ENCODE measurements at regions of chr17 and their contacts with region 1.

Region 1: GRCh38 chr17:48492401-48493298 is 38.2 kb downstream of the HOXB1 start:
- DNase-seq: peak; percentile 76
- ATAC-seq: peak; percentile 95
- H3K4me3 Mint-ChIP-seq: peak overlapping the region; percentile 46
- H3K27ac Mint-ChIP-seq: peak overlapping the region; percentile 24
- H3K4me1 Mint-ChIP-seq: peaks cover 35% of the 10 kb centered on the region
- H3K27me3 Mint-ChIP-seq: peaks cover 16% of the 10 kb centered on the region

Region 2: GRCh38 chr17:48351831-48352332 is 140.8 kb before region 1 on chr17:
- CTCF ChIA-PET with region 1: interaction called, 29 read pairs
- DNase-seq: no peak
- ATAC-seq: peak; percentile 30
- H3K4me3 Mint-ChIP-seq: no peak overlapping the region
- H3K27ac Mint-ChIP-seq: no peak overlapping the region
- H3K4me1 Mint-ChIP-seq: peaks cover 14% of the 10 kb centered on the region
- H3K27me3 Mint-ChIP-seq: no peaks in the 10 kb centered on the region

Region 3: DNA sequence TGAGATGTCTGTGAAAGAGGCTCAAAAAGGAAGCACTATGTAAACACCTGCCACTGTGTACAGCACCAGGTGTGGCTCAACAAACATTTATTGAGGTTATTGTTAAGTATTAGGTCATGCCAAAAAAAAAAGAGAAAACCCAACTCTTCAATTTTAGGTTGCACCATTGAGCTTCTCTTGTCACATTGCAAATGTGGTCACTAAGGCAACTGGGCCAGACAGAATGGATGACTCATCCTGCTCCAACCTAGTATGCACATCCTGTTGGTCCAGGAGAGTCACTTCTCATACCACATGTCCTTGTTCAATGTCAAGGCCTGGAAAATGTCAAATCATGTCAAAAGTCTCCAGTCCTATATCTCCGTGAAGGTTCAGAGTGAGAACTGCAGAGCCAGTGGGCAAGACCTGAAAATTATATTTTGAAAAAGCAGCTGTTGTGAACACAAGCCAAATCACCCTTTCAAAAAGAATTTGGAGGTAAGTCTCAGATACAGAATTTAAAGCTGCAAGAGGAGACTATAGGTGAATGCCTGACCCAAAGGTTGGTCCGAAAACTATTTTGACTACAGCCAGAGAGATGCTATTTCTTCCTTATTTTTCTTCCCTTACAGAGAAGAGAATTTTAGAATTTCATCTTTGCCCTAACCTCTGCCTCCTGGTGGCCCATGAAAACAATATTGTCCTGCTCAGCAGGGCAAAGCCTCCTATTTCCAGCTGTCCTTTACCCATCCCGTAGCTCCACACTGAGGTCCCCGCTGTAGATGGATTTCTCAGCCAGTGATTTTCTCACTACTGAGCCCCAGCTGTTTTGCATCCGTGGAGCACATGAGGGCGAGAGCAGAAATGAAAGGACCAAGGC is 13.4 kb after region 1 on chr17:
- CTCF ChIA-PET with region 1: interaction called, 43 read pairs
- DNase-seq: peak; percentile 88
- ATAC-seq: peak; percentile 98
- H3K4me3 Mint-ChIP-seq: no peak overlapping the region
- H3K27ac Mint-ChIP-seq: peak overlapping the region; percentile 82
- H3K4me1 Mint-ChIP-seq: peaks cover 43% of the 10 kb centered on the region
- H3K27me3 Mint-ChIP-seq: peaks cover 13% of the 10 kb centered on the region

Region 4: DNA sequence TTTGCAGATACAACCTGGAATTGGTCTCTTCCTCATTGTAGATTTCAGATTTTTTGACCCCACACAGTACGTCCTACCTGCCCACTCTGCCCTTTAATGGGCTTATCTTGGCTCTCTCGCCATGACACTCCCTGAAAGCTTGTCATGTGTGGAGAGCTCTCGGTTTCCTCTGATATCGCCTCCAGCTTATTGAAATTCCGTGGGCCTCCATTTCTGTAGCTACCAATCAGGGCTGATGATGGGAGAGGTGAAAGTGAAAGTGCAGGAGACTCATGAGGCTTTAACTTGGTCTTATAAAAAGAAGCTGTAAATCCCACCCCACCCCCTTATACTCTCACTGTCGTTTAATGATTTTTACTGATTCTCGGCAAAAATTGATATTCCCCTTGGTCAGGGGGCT is 20.4 kb after region 1 on chr17:
- CTCF ChIA-PET with region 1: interaction called, 16 read pairs
- DNase-seq: no peak
- ATAC-seq: peak; percentile 18
- H3K4me3 Mint-ChIP-seq: peak overlapping the region; percentile 34
- H3K27ac Mint-ChIP-seq: peak overlapping the region; percentile 79
- H3K4me1 Mint-ChIP-seq: peaks cover 62% of the 10 kb centered on the region
- H3K27me3 Mint-ChIP-seq: peaks cover 34% of the 10 kb centered on the region

Region 5: DNA sequence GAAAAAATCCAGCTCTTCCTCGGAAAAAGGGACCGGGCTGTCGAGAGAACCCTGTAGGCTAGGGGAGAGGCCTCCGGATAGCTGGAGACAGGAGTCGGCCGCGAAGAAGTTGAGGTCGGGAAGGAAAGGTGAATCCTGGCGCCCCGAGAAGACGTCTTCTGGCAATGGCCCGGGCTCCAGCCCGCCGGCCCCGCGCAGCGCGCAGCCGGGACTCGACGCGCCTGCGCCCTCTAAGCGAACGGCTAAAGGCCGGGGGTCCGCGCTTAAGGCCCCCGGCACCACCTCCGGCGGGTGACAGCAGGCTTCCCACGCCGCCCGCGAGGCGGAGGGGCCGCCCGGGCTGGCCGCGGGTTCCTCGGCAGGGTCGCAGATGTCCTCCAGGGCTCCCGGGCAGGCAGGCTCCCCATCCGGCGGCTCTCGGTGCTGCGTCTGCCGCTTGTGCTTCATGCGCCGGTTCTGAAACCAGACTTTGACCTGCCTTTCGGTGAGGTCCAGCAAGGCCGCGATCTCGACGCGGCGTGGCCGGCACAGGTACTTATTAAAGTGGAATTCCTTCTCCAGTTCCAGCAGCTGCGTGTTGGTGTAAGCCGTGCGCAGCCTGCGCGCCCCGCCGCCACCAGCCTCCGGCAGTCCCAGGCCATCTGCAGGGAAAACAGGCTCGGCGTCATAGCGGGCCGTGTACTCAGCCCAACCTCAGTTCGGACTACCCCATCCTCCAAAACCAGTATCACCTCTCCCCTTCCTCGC is 50.6 kb after region 1 on chr17:
- CTCF ChIA-PET with region 1: interaction called, 17 read pairs
- DNase-seq: peak; percentile 79
- ATAC-seq: peak; percentile 74
- H3K4me3 Mint-ChIP-seq: peak overlapping the region; percentile 88
- H3K27ac Mint-ChIP-seq: peak overlapping the region; percentile 95
- H3K4me1 Mint-ChIP-seq: peaks cover 43% of the 10 kb centered on the region
- H3K27me3 Mint-ChIP-seq: peaks cover 18% of the 10 kb centered on the region

Region 6: DNA sequence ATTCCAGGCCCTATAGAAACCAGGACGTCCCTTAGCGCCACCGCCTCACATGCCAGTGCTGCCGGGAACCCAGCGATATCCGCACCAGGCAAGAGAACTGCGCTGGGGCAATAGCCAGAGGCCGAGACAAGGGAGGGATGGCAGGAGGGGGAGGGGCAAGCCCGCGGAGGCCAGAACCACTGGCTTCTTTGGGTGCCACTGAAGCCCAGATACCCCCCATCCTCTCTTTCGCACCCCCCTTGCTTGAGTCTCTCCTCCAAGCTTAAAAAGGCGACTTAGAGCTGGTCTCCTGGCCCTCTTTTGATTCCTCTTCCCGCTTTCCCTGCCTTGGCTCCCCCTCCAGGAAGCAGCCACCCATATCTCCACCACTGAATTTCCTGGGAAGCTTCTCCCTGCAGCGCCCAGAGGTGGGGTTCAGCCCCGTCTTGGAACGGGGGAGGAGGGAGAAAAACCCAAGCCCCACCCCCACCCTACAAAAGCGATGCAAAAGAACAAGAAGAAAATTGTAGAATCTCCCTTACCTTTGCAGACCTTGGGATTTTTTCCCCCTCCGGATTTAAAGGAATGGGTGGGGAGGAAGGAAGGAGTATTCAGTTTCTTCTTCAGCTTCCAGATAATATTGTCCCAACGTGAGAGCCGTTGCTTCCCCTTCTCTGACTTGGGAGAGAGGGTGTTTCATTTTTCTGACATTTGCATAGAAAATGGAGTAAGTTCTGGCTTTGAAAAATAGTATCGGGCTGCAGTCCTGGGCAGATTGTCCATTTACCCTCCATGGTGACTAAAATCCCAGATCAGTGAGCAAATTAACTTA is 111.5 kb after region 1 on chr17:
- CTCF ChIA-PET with region 1: no interaction called
- DNase-seq: no peak
- ATAC-seq: no peak
- H3K4me3 Mint-ChIP-seq: peak overlapping the region; percentile 22
- H3K27ac Mint-ChIP-seq: no peak overlapping the region
- H3K4me1 Mint-ChIP-seq: peaks cover 37% of the 10 kb centered on the region
- H3K27me3 Mint-ChIP-seq: peaks cover 95% of the 10 kb centered on the region